ENCODE measurements at regions of chr19 and their contacts with region 1.

Region 1: GRCh38 chr19:23876261-23876660 is 38.4 kb upstream of the ZNF726 start:
- DNase-seq: no peak
- ATAC-seq: no peak
- H3K4me3 ChIP-seq: no peak overlapping the region
- H3K27ac ChIP-seq: no peak overlapping the region
- H3K4me1 ChIP-seq: no peaks in the 10 kb centered on the region
- H3K27me3 ChIP-seq: no peaks in the 10 kb centered on the region
- CTCF ChIP-seq: no peak

Region 2: DNA sequence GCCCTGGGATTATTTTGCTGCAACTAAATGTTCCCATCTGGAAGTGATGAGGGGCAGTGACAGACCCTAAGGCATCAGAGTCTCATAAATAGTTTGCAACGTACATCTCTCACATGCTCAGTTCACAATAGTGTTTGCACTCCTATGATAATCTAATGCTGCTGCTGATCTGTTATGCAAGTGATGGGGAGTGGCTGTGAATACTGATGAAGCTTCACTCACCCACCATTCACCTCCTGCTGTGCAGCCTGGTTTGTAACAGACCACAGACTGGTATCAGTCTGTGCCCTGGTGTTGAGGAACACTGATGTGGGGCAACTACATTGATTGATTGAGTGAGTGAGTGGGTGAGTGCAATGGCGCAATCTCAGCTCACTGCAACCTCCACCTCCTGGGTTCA is 93.4 kb after region 1 on chr19:
- intact Hi-C with region 1: loop called (anchors 5 kb)
- DNase-seq: no peak
- ATAC-seq: no peak
- H3K4me3 ChIP-seq: no peak overlapping the region
- H3K27ac ChIP-seq: no peak overlapping the region
- H3K4me1 ChIP-seq: no peaks in the 10 kb centered on the region
- H3K27me3 ChIP-seq: peaks cover 11% of the 10 kb centered on the region
- CTCF ChIP-seq: no peak